Activated naive CD4-positive, alpha-beta T cell treated with anti-CD3 and anti-CD28 coated beads for 36 hours (primary cell): ENCODE measurements at regions of chr3 and their contacts with region 1.

Region 1: GRCh38 chr3:158091531-158091930 is 14.7 kb downstream of the SHOX2 start:
- DNase-seq: no peak
- H3K4me3 Mint-ChIP-seq: no peak overlapping the region
- H3K27ac Mint-ChIP-seq: no peak overlapping the region
- H3K4me1 Mint-ChIP-seq: no peaks in the 10 kb centered on the region
- H3K27me3 Mint-ChIP-seq: peaks cover 66% of the 10 kb centered on the region

Region 2: GRCh38 chr3:158026236-158026635 is 65.3 kb before region 1 on chr3:
- CTCF ChIA-PET with region 1: no interaction called
- intact Hi-C with region 1: no loop called
- DNase-seq: no peak
- H3K4me3 Mint-ChIP-seq: no peak overlapping the region
- H3K27ac Mint-ChIP-seq: no peak overlapping the region
- H3K4me1 Mint-ChIP-seq: no peaks in the 10 kb centered on the region
- H3K27me3 Mint-ChIP-seq: no peaks in the 10 kb centered on the region

Region 3: DNA sequence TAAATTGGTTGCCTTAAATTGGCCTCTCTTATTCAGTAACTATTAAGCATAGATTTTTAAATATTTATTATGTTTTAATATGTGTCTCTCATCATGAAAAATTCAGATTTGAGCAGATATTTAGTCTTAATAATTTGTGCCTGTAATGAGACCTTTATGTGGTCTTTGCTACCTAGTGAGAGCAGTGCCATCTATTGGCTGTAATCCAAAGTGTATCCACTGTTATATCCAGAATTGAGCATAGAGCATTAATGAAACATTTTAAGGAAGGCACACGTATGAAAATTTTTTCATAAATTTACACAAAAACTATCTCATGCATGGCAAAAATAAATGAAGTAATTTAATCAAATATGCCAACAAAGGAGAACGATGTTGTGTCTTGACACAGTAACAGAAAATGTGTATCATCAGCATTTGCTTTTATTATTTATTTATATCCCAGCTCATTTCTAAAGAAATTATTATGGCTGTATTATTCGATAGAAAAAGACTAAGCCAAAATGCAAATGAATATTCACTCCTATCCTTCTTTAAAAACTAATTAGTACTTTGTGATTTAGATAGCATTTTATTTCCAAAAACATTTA is 221.9 kb after region 1 on chr3:
- CTCF ChIA-PET with region 1: no interaction called
- intact Hi-C with region 1: loop called (anchors 1 kb)
- DNase-seq: no peak
- H3K4me3 Mint-ChIP-seq: no peak overlapping the region
- H3K27ac Mint-ChIP-seq: no peak overlapping the region
- H3K4me1 Mint-ChIP-seq: peaks cover 1% of the 10 kb centered on the region
- H3K27me3 Mint-ChIP-seq: no peaks in the 10 kb centered on the region